HepG2 (cell line): ENCODE measurements at regions of chr16 and their contacts with region 1.

Region 1: DNA sequence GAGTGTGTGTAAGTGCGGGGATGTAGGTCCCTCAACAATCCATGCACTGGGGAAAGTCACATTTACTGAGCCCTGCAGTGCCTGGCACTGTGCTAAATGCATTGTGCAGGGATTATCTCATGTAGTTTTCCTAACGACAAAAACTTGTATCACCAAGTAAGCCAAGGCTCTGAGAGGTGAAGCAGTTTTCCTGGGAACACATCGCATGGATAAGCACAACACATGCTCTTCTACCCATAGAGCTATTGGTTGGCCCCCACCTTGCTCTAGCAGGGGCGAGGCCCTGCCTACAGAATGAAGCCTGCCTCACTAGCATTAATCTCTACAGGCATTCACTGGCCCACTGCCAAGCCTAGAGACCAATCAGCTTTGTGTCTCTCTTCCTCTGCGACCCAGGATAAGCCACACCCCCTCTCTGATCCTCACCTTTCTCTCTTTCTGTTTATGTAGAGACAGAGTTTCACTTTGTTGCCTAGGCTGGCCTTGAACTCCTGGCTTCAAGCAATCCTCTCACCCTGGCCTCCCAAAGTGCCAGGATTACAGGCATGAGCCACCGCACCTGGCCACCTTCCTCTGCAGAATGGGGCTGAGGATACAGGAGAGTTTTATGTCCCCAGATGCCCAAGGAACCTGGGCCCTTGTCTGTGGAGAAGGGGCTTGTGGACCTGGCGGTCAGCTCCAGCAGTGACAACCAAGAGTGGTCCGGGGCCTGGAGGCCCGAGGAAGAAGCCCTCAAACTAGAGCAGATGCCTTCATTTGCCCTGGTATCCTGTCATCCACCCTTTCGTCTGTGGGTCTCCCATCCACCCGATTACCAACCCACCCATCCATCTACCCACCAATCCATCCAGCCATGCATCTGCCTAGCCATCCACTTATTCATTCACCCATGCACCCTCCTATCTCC is 12.8 kb downstream of the CDH16 start:
- DNase-seq: peak; percentile 99
- ATAC-seq: peak; percentile 73
- H3K4me3 ChIP-seq: peak overlapping the region; percentile 52 to 72 (median 56)
- H3K27ac ChIP-seq: peak overlapping the region; percentile 75
- H3K4me1 ChIP-seq: peaks cover 84% of the 10 kb centered on the region
- H3K27me3 ChIP-seq: no peaks in the 10 kb centered on the region
- CTCF ChIP-seq: 0 out of 2 replicates have a peak, but pooled peaks have one; percentile 8
- EP300 ChIP-seq: peak in 1 of 2 experiments; percentile 75; a peak in 2 of 4 replicates
- POLR2A ChIP-seq: peak; percentile 54 to 66
- RAD21 ChIP-seq: no peak

Region 2: GRCh38 chr16:66880288-66881013 is 25.4 kb before region 1 on chr16 and contains the start of gene PDP2:
- CTCF ChIA-PET with region 1: no interaction called
- POLR2A ChIA-PET with region 1: interaction called, 30 read pairs
- in situ Hi-C with region 1: no loop called
- intact Hi-C with region 1: no loop called
- DNase-seq: peak; percentile 97
- ATAC-seq: peak; percentile 99
- H3K4me3 ChIP-seq: peak within 1 kb of the TSS; percentile 73 to 92 (median 85)
- H3K27ac ChIP-seq: peak within 1 kb of the TSS; percentile 69
- H3K4me1 ChIP-seq: peaks cover 43% of the 10 kb centered on the region
- H3K27me3 ChIP-seq: no peaks in the 10 kb centered on the region
- CTCF ChIP-seq: no peak; the same call in 1 of the 2 replicates
- EP300 ChIP-seq: peak in 1 of 2 experiments; percentile 1; a peak in 1 of 4 replicates
- POLR2A ChIP-seq: peak; percentile 78 to 92
- RAD21 ChIP-seq: peak; percentile 21; the same call in 1 of the 2 replicates
- total RNA-seq, gene PDP2: 15.8 and 38.2 TPM in 2 replicates

Region 3: GRCh38 chr16:66924527-66925321 is 18.8 kb after region 1 on chr16:
- CTCF ChIA-PET with region 1: no interaction called
- POLR2A ChIA-PET with region 1: interaction called, 86 read pairs
- in situ Hi-C with region 1: no loop called
- intact Hi-C with region 1: no loop called
- DNase-seq: no peak
- ATAC-seq: peak; percentile 79
- H3K4me3 ChIP-seq: peak overlapping the region; percentile 40 to 73 (median 56); a peak in 4 of 6 replicates
- H3K27ac ChIP-seq: no peak overlapping the region
- H3K4me1 ChIP-seq: peaks cover 44% of the 10 kb centered on the region
- H3K27me3 ChIP-seq: peaks cover 5 to 22% of the 10 kb centered on the region in 2 experiments; a peak in 4 of 5 replicates
- CTCF ChIP-seq: peak; percentile 77
- EP300 ChIP-seq: no peak
- POLR2A ChIP-seq: no peak
- RAD21 ChIP-seq: peak; percentile 95

Region 4: GRCh38 chr16:67006930-67007658 is 101.2 kb after region 1 on chr16:
- CTCF ChIA-PET with region 1: no interaction called
- POLR2A ChIA-PET with region 1: no interaction called
- in situ Hi-C with region 1: no loop called
- intact Hi-C with region 1: no loop called
- DNase-seq: no peak
- ATAC-seq: no peak
- H3K4me3 ChIP-seq: no peak overlapping the region
- H3K27ac ChIP-seq: no peak overlapping the region
- H3K4me1 ChIP-seq: peaks cover 38% of the 10 kb centered on the region
- H3K27me3 ChIP-seq: peaks cover 1 to 33% of the 10 kb centered on the region in 2 experiments; a peak in 4 of 5 replicates
- CTCF ChIP-seq: no peak
- EP300 ChIP-seq: no peak
- POLR2A ChIP-seq: no peak
- RAD21 ChIP-seq: no peak

Region 5: DNA sequence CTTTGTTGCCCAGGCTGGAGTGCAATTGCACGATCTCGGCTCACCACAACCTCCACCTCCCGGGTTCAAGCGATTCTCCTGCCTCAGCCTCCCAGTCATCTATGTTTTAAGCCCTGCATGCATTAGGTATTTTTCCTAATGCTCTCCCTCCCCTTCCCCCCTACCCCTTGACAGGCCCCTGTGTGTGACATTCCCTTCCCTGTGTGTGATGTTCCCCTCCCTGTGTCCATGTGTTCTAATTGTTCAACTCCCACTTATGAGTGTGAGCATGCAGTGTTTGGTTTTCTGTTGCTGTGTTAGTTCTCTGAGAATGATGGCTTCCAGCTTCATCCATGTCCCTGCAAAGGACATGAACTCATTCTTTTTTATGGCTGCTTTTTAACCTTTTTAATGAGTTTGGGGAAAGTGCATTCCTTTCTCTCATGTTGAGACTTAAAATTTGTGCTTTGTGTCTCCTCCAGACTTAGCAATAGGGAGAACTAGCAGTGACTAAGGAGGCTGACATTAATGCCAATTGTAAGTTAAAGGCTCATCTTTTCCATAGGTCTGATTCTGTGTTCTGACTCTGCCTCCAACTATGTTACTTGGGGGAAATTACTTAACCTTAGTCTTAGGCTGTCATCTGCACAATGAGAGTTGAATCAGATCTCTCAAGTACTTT is 186.2 kb after region 1 on chr16:
- CTCF ChIA-PET with region 1: no interaction called
- POLR2A ChIA-PET with region 1: no interaction called
- in situ Hi-C with region 1: no loop called
- intact Hi-C with region 1: no loop called
- DNase-seq: no peak
- ATAC-seq: no peak
- H3K4me3 ChIP-seq: no peak overlapping the region
- H3K27ac ChIP-seq: no peak overlapping the region
- H3K4me1 ChIP-seq: no peaks in the 10 kb centered on the region
- H3K27me3 ChIP-seq: no peaks in the 10 kb centered on the region
- CTCF ChIP-seq: no peak
- EP300 ChIP-seq: no peak
- POLR2A ChIP-seq: no peak
- RAD21 ChIP-seq: no peak

Region 6: GRCh38 chr16:67260426-67261075 is 354.7 kb after region 1 on chr16:
- CTCF ChIA-PET with region 1: no interaction called
- POLR2A ChIA-PET with region 1: no interaction called
- in situ Hi-C with region 1: no loop called
- intact Hi-C with region 1: no loop called
- DNase-seq: peak; percentile 56
- ATAC-seq: peak; percentile 71
- H3K4me3 ChIP-seq: no peak overlapping the region
- H3K27ac ChIP-seq: no peak overlapping the region
- H3K4me1 ChIP-seq: peaks cover 8% of the 10 kb centered on the region
- H3K27me3 ChIP-seq: peaks cover 5 to 30% of the 10 kb centered on the region in 2 experiments; a peak in 4 of 5 replicates
- CTCF ChIP-seq: peak; percentile 80
- EP300 ChIP-seq: no peak
- POLR2A ChIP-seq: no peak
- RAD21 ChIP-seq: peak; percentile 68

Region 7: DNA sequence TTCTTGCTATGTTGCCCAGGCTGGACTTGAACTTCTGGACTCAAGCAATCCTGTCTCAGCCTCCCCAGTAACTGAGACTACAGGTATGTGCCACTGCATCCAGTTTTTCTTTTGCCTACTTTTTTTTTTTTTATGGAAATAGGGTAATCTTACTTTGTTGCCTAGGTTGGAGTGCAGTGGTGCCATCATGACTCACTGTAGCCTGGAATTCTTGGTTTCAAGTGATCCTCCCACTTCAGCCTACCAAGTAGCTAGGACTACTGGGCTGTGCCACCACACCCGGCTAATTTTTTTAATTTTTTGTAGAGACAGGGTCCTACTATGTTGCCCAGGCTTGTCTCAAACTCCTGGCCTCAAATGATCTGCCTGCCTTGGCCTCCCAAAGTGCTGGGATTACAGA is 430.8 kb after region 1 on chr16:
- CTCF ChIA-PET with region 1: no interaction called
- POLR2A ChIA-PET with region 1: no interaction called
- in situ Hi-C with region 1: no loop called
- intact Hi-C with region 1: no loop called
- DNase-seq: no peak
- ATAC-seq: no peak
- H3K4me3 ChIP-seq: no peak overlapping the region
- H3K27ac ChIP-seq: no peak overlapping the region
- H3K4me1 ChIP-seq: no peaks in the 10 kb centered on the region
- H3K27me3 ChIP-seq: no peaks in the 10 kb centered on the region
- CTCF ChIP-seq: no peak
- EP300 ChIP-seq: no peak
- POLR2A ChIP-seq: no peak
- RAD21 ChIP-seq: no peak